Heart right ventricle (tissue), 16 donors: ENCODE measurements at regions of chr4 and their contacts with region 1.

Region 1: GRCh38 chr4:77862478-77863216 is at the start of gene MRPL1:
- DNase-seq: peak; percentile 83 to 93
- ATAC-seq: peak; percentile 95 to 97 (median 97)
- H3K4me3 ChIP-seq: peak within 1 kb of the TSS; percentile 42 to 85 (median 70)
- H3K27ac ChIP-seq: peak within 1 kb of the TSS; percentile 93 to 99 (median 96)
- H3K4me1 ChIP-seq: peaks cover 0 to 24% (median 14%) of the 10 kb centered on the region in 9 donors
- H3K27me3 ChIP-seq: no peaks in the 10 kb centered on the region
- CTCF ChIP-seq: peak in 1 of 9 donors; percentile 2
- total RNA-seq, gene MRPL1: 29.1 to 57.6 (median 46.7) TPM

Region 2: GRCh38 chr4:77618383-77619122 is 244.1 kb before region 1 on chr4:
- intact Hi-C with region 1: loop called in 2 of 10 experiments (anchors 5 to 10 kb)
- DNase-seq: peak in 1 of 2 donors; percentile 82
- ATAC-seq: peak; percentile 85 to 96 (median 92)
- H3K4me3 ChIP-seq: peak overlapping the region in 3 of 10 donors; percentile 4 to 23 (median 10)
- H3K27ac ChIP-seq: no peak overlapping the region
- H3K4me1 ChIP-seq: peaks cover 0 to 11% (median 4%) of the 10 kb centered on the region in 9 donors
- H3K27me3 ChIP-seq: no peaks in the 10 kb centered on the region
- CTCF ChIP-seq: peak; percentile 54 to 89 (median 85)

Region 3: GRCh38 chr4:77629885-77630284 is 232.8 kb before region 1 on chr4:
- intact Hi-C with region 1: loop called in 1 of 10 experiments (anchors 10 kb)
- DNase-seq: no peak
- ATAC-seq: no peak
- H3K4me3 ChIP-seq: no peak overlapping the region
- H3K27ac ChIP-seq: no peak overlapping the region
- H3K4me1 ChIP-seq: no peaks in the 10 kb centered on the region
- H3K27me3 ChIP-seq: no peaks in the 10 kb centered on the region
- CTCF ChIP-seq: no peak